Activated CD4-positive, alpha-beta memory T cell treated with anti-CD3 and anti-CD28 coated beads, Interleukin-2, amount 10 ng/mL, durations not matched to agents 7 days and 5 days (primary cell): ENCODE measurements at regions of chr20 and their contacts with region 1.

Region 1: GRCh38 chr20:32779500-32780211 is 17.5 kb downstream of the DNMT3B start:
- DNase-seq: no peak
- H3K4me3 Mint-ChIP-seq: no peak overlapping the region
- H3K27ac Mint-ChIP-seq: no peak overlapping the region
- H3K4me1 Mint-ChIP-seq: peaks cover 3% of the 10 kb centered on the region
- H3K27me3 Mint-ChIP-seq: no peaks in the 10 kb centered on the region

Region 2: GRCh38 chr20:32418376-32418775 is 361.3 kb before region 1 on chr20:
- CTCF ChIA-PET with region 1: no interaction called
- POLR2A ChIA-PET with region 1: no interaction called
- DNase-seq: no peak
- H3K4me3 Mint-ChIP-seq: no peak overlapping the region
- H3K27ac Mint-ChIP-seq: peak overlapping the region; percentile 19
- H3K4me1 Mint-ChIP-seq: peaks cover 29% of the 10 kb centered on the region
- H3K27me3 Mint-ChIP-seq: no peaks in the 10 kb centered on the region

Region 3: DNA sequence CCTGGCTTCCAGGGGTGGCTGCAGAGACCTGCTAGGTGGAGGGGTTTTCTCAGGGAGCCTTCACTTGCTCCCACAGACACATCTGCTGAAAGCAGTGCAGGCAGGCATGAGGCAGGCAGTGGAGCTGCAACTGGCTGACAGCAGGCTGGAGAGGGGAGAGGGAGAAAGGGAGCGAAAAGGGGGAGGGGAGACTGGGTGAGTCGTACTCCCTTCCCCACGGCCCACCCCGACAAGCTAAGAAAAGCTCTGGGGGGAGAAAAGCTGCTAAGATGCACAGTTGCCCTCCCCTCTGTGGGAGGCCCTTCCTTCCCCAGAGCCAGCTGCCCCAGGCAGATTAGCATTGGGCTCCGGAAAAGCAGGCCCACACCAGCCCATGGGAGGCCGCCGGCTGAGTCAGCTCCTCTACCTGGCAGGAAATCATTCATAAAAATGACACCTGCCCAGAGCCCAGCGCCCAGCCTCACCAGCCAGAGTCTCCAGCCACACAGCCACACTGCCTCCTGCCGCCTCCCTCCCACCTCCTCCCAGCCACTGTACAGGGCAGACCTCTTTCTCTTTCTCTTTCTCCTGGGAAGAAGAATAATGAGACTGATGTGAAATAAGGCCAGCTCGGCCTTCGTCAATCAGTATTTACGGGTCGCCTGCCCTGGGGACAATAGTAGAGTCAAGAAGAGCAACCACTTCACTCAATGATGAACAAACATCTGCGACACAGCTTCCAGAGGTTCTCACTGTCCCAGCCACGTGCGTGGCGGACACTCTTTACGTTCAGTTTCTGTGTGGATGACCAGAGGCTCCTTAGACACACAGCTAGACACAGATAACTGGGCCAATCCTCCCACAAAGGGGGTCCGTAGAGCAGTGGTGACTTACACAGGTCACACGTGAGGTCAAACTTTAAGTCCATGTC is 98.2 kb before region 1 on chr20:
- CTCF ChIA-PET with region 1: interaction called, 241 read pairs
- POLR2A ChIA-PET with region 1: no interaction called
- DNase-seq: no peak
- H3K4me3 Mint-ChIP-seq: no peak overlapping the region
- H3K27ac Mint-ChIP-seq: no peak overlapping the region
- H3K4me1 Mint-ChIP-seq: peaks cover 20% of the 10 kb centered on the region
- H3K27me3 Mint-ChIP-seq: no peaks in the 10 kb centered on the region

Region 4: DNA sequence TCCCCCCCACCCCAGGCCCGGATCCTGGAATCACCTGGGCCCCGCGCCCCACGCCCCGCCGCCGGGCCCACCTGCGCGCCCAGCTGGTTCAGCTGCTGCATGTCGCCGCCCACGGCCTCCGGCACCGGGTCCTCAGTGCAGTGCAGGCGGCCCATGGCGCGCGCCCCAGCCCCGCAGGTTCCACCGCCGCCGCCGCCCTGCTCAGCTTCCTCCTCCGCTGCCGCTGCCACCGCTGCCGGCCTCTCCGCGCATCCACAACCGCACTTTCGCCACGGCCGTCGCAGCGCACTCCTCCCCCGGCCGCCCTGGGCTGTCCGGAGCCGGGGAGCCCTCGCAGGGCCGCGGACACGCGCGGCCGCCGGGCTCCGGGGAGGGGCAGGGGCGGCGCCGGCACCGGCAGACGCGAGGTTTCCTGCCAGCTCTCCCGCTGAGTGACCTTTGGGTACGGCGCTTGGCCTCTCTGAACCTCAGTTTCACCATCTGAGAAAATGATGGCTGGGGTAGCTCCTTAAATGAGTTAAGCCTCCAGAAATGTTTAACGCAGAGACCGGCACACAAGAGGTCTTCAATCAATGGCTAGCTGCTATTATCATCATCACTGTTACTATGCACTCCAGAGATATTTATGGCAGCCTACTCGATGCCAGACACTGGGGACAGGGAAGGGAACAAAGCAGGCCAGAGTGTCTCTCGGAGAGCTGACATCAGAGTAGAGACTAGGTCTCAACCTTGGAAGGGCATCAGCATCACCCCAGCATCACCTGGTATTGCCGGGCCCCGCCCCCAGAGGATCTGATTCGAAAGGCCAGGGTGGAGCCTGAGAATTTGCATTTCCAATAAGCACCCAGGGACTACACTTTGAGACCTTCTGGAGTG is 36.2 kb before region 1 on chr20 and contains the start of gene COMMD7:
- CTCF ChIA-PET with region 1: interaction called, 16 read pairs
- POLR2A ChIA-PET with region 1: interaction called, 11 read pairs
- DNase-seq: peak; percentile 83
- H3K4me3 Mint-ChIP-seq: peak within 1 kb of the TSS; percentile 88
- H3K27ac Mint-ChIP-seq: peak within 1 kb of the TSS; percentile 100
- H3K4me1 Mint-ChIP-seq: peaks cover 46% of the 10 kb centered on the region
- H3K27me3 Mint-ChIP-seq: no peaks in the 10 kb centered on the region
- total RNA-seq, gene COMMD7: 61.7 to 62.6 TPM

Region 5: DNA sequence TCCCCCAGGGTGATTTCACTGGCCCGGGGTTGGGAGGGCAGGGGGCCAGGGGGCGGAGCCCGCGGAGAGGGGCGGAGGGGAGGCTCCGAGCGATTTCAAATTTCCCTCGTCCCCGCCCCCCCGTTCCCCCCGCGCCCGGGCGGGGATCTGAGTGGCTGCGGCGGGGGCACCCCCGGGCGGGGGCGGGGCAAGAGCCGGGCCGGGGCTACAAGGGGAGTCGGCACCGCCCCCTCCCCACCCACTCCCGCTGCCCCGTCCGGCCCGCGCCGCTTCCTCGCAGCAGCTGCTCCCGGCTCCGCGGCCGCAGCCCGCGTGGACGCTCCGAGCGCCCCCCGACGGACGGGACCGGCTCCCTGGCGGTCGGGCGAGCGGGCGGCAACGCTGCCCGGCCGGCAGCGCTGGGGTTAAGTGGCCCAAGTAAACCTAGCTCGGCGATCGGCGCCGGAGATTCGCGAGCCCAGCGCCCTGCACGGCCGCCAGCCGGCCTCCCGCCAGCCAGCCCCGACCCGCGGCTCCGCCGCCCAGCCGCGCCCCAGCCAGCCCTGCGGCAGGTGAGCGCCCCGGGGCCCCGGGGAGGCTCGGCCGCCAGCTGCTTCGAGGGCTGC is 17.4 kb before region 1 on chr20 and contains the start of gene DNMT3B:
- CTCF ChIA-PET with region 1: interaction called, 21 read pairs
- POLR2A ChIA-PET with region 1: interaction called, 5 read pairs
- DNase-seq: peak; percentile 77
- H3K4me3 Mint-ChIP-seq: peak within 1 kb of the TSS; percentile 81
- H3K27ac Mint-ChIP-seq: peak within 1 kb of the TSS; percentile 15
- H3K4me1 Mint-ChIP-seq: peaks cover 15% of the 10 kb centered on the region
- H3K27me3 Mint-ChIP-seq: peaks cover 16% of the 10 kb centered on the region
- total RNA-seq, gene DNMT3B: 2.2 to 2.4 TPM

Region 6: GRCh38 chr20:32789896-32790750 is 10.5 kb after region 1 on chr20:
- CTCF ChIA-PET with region 1: interaction called, 15 read pairs
- POLR2A ChIA-PET with region 1: no interaction called
- DNase-seq: peak; percentile 75
- H3K4me3 Mint-ChIP-seq: no peak overlapping the region
- H3K27ac Mint-ChIP-seq: no peak overlapping the region
- H3K4me1 Mint-ChIP-seq: peaks cover 19% of the 10 kb centered on the region
- H3K27me3 Mint-ChIP-seq: no peaks in the 10 kb centered on the region

Region 7: DNA sequence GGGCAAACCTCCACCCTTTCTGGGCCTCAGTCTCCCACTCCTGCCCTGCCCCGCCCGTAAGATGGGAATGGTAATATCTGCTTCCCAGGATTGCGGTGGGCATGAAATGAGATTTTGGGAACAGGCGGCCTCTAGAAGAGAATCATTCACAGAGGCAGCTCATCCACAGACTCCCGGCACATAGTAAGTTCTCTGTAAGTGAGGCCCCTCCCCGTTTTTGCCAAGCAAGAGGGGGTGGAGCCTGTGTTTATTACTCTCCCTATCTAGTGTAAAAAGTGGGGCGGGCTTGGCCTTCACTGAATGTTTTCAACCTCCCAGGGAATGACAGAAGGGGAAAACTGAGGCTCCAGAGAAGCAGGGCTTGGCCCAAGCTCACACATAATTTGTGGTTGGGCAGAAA is 204.5 kb after region 1 on chr20:
- CTCF ChIA-PET with region 1: no interaction called
- POLR2A ChIA-PET with region 1: no interaction called
- DNase-seq: no peak
- H3K4me3 Mint-ChIP-seq: no peak overlapping the region
- H3K27ac Mint-ChIP-seq: no peak overlapping the region
- H3K4me1 Mint-ChIP-seq: no peaks in the 10 kb centered on the region
- H3K27me3 Mint-ChIP-seq: no peaks in the 10 kb centered on the region